Ovary (tissue), 10 donors: ENCODE measurements at regions of chr18 and their contacts with region 1.

Region 1: GRCh38 chr18:44700652-44701051 is 20.0 kb downstream of the SETBP1 start:
- DNase-seq: peak in 3 of 5 donors; percentile 45 to 57 (median 52)
- H3K4me3 ChIP-seq: no peak overlapping the region
- H3K27ac ChIP-seq: peak overlapping the region in 1 of 2 donors; percentile 85
- H3K4me1 ChIP-seq: peaks cover 26% of the 10 kb centered on the region
- H3K27me3 ChIP-seq: no peaks in the 10 kb centered on the region
- CTCF ChIP-seq: no peak
- EP300 ChIP-seq: no peak
- POLR2A ChIP-seq: no peak

Region 2: GRCh38 chr18:44186001-44186400 is 514.7 kb before region 1 on chr18:
- intact Hi-C with region 1: no loop called
- DNase-seq: no peak
- H3K4me3 ChIP-seq: no peak overlapping the region
- H3K27ac ChIP-seq: no peak overlapping the region
- H3K4me1 ChIP-seq: no peaks in the 10 kb centered on the region
- H3K27me3 ChIP-seq: no peaks in the 10 kb centered on the region
- CTCF ChIP-seq: no peak
- EP300 ChIP-seq: no peak
- POLR2A ChIP-seq: no peak

Region 3: DNA sequence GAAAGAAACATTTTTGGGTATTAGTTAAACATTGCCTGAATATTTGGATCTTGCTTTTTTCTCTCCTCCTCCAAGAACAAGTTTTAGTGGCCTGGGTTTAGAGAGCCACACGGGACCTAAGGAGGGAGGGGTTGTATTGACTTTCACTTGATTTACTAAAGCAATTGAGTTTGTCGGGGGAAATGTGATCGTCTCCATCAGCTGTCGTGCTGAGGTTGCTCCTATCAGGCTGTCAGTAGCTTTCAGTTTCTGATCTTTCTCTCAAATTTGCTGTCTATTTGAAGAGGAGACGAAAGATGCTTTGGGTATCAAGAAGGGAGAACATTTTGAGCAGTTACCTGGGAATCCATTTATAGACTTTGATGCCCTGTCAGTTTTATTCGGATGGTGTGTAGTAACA is 86.0 kb after region 1 on chr18:
- intact Hi-C with region 1: loop called in 2 of 4 experiments (anchors 10 kb)
- DNase-seq: no peak
- H3K4me3 ChIP-seq: no peak overlapping the region
- H3K27ac ChIP-seq: no peak overlapping the region
- H3K4me1 ChIP-seq: peaks cover 17% of the 10 kb centered on the region
- H3K27me3 ChIP-seq: no peaks in the 10 kb centered on the region
- CTCF ChIP-seq: no peak
- EP300 ChIP-seq: no peak
- POLR2A ChIP-seq: no peak

Region 4: DNA sequence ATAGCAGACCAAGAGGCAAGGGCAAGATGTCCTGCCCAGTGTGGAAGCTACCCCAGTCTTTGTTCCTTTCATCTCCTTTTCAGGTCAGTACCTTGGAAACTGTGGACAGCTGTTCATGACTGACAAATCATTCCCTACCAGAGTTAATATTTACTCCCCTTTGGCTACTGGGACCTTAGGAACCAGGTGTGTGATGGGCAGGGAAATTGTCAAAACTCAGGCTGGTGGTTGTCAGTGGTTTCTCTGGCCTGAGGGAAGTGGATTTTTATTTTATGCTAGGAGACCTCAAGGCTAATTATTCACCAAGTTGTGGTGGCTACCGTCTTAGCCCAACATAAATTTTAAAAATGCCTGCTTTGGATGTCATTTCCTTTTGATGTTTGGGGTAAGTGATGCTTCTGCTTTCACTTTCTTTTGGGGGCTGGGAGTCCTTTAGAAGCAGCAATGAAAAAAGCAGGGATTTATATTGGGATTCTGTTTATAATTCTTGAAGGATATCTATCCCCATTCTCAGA is 99.3 kb after region 1 on chr18:
- intact Hi-C with region 1: loop called in 1 of 4 experiments (anchors 10 kb)
- DNase-seq: no peak
- H3K4me3 ChIP-seq: no peak overlapping the region
- H3K27ac ChIP-seq: no peak overlapping the region
- H3K4me1 ChIP-seq: peaks cover 3% of the 10 kb centered on the region
- H3K27me3 ChIP-seq: no peaks in the 10 kb centered on the region
- CTCF ChIP-seq: no peak
- EP300 ChIP-seq: no peak
- POLR2A ChIP-seq: no peak